Sigmoid colon (tissue), 7 donors: ENCODE measurements at regions of chr6 and their contacts with region 1.

Region 1: GRCh38 chr6:117976030-117976651 is 69.1 kb downstream of the SLC35F1 start:
- DNase-seq: no peak
- H3K4me3 ChIP-seq: no peak overlapping the region
- H3K27ac ChIP-seq: no peak overlapping the region
- H3K4me1 ChIP-seq: no peaks in the 10 kb centered on the region
- H3K27me3 ChIP-seq: no peaks in the 10 kb centered on the region
- CTCF ChIP-seq: peak in 3 of 4 experiments; percentile 24 to 42 (median 33)
- EP300 ChIP-seq: no peak
- POLR2A ChIP-seq: no peak

Region 2: GRCh38 chr6:118263921-118264486 is 287.9 kb after region 1 on chr6:
- intact Hi-C with region 1: loop called (anchors 5 kb)
- DNase-seq: no peak
- H3K4me3 ChIP-seq: no peak overlapping the region
- H3K27ac ChIP-seq: no peak overlapping the region
- H3K4me1 ChIP-seq: no peaks in the 10 kb centered on the region
- H3K27me3 ChIP-seq: no peaks in the 10 kb centered on the region
- CTCF ChIP-seq: peak in 2 of 4 experiments; percentile 13 to 25
- EP300 ChIP-seq: no peak
- POLR2A ChIP-seq: no peak

Region 3: GRCh38 chr6:118618679-118619377 is 642.7 kb after region 1 on chr6:
- intact Hi-C with region 1: loop called (anchors 10 kb)
- DNase-seq: peak; percentile 69
- H3K4me3 ChIP-seq: no peak overlapping the region
- H3K27ac ChIP-seq: no peak overlapping the region
- H3K4me1 ChIP-seq: peaks cover 0 to 20% (median 3%) of the 10 kb centered on the region in 4 donors
- H3K27me3 ChIP-seq: no peaks in the 10 kb centered on the region
- CTCF ChIP-seq: peak; percentile 76 to 87 (median 85)
- EP300 ChIP-seq: no peak
- POLR2A ChIP-seq: no peak